ENCODE measurements at regions of chr2 and their contacts with region 1.

Region 1: DNA sequence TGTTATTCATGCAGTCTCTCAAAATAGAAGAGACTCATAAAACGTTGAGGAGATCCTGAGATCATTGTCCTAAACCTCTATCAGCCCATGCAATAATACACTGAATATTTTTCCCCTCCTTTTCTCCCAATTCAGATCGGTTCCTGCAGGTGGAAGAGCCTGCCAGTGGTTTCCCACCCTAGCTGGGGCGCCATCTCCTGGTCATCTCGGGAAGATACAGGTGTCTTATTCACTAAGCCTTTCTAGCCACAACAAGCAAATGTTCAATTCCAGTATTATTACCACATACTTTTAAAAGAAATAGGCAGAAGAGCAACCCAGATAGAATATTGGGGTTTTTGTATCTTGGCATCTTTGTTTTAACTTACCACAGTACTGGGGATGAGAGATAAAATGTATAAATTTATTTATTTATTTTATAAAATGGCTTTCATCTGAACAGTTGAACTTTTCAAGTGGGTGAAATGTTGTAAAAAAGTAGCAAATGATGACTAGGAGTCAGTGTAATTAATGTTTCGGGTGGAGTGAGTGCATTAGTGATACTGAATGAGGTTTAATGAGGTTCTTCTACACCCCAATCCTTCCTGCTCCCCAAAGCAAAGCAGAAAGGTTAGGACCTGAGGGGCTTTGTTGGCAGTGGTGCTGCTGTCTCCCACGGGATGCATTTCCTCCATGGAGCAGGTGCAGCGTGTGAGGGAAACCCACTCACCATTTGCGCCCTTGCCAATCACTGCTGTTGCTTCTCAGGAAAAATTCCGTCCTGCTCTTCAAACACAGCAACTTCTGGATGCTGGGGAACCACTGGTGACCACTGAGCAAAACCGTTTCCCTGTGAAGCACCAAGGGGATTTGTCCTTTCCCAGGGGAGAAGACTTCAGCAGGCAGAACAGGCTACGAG is 147.1 kb upstream of the FHL2 start:
- ATAC-seq: peak in 5 of 8 experiments; percentile 42 to 90 (median 58)
- H3K4me3 ChIP-seq: no peak overlapping the region
- H3K27ac ChIP-seq: no peak overlapping the region
- H3K4me1 ChIP-seq: no peaks in the 10 kb centered on the region

Region 2: GRCh38 chr2:105369747-105370690 is 176.0 kb before region 1 on chr2:
- in situ Hi-C with region 1: loop called in 1 of 9 experiments (anchors 25 kb)
- ATAC-seq: peak; percentile 76 to 99 (median 97)
- H3K4me3 ChIP-seq: no peak overlapping the region
- H3K27ac ChIP-seq: no peak overlapping the region
- H3K4me1 ChIP-seq: peaks cover 0 to 7% of the 10 kb centered on the region in 2 donors

Region 3: GRCh38 chr2:105691947-105692390 is 146.0 kb after region 1 on chr2:
- in situ Hi-C with region 1: no loop called
- ATAC-seq: peak in 3 of 8 experiments; percentile 63 to 73 (median 71)
- H3K4me3 ChIP-seq: no peak overlapping the region
- H3K27ac ChIP-seq: no peak overlapping the region
- H3K4me1 ChIP-seq: no peaks in the 10 kb centered on the region

Region 4: DNA sequence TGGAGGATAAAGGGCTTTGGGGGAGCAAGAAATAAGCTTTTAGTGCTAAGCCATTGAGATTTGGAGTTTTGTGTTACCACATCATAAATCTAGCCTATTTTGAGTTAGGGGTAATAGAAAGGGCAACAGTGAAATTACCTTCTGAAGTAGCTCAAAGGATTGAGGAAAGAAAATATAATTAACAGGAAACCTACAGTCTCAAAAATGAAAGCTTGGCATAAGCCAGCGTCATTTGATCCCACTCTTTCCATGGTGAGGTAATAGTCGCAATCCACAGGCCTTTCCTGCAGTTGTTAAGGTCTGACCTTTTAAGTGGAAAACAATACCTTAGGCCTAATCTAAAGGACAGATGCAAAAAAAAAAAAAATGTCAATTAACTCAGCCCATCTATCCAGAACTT is 465.4 kb after region 1 on chr2:
- in situ Hi-C with region 1: no loop called
- ATAC-seq: no peak
- H3K4me3 ChIP-seq: no peak overlapping the region
- H3K27ac ChIP-seq: no peak overlapping the region
- H3K4me1 ChIP-seq: no peaks in the 10 kb centered on the region